ENCODE measurements at regions of chr2 and their contacts with region 1.

Region 1: GRCh38 chr2:200901459-200902072 is 12.4 kb downstream of the NIF3L1 start:
- DNase-seq: peak; percentile 84
- CTCF ChIP-seq: peak; percentile 34

Region 2: GRCh38 chr2:200756618-200757321 is 144.8 kb before region 1 on chr2:
- in situ Hi-C with region 1: no loop called
- DNase-seq: no peak
- CTCF ChIP-seq: no peak

Region 3: GRCh38 chr2:201059961-201060755 is 158.6 kb after region 1 on chr2:
- in situ Hi-C with region 1: loop called (anchors 10 kb)
- DNase-seq: no peak
- CTCF ChIP-seq: no peak

Region 4: GRCh38 chr2:201074996-201075395 is 173.4 kb after region 1 on chr2:
- in situ Hi-C with region 1: no loop called
- DNase-seq: no peak
- CTCF ChIP-seq: no peak

Region 5: DNA sequence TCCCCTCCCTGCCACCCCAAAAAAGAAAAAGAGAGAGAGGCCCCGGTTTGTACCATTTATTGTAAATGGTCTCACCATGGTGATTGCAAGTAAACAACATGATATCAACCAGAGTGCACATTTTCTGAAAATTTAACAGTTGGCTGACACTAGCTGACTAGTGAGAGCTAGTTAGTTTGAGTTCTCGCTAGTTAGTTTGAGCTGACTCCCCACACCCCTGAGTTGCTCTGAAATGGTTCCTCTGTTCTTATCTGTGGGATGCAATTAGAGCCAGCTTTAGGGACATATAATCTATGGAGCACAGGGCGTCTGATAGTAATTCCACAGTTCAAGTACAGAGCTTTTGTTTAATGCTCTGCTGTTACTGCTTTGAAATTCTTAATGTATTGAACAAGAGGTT is 294.4 kb after region 1 on chr2:
- in situ Hi-C with region 1: no loop called
- DNase-seq: no peak
- CTCF ChIP-seq: no peak

Region 6: GRCh38 chr2:201618744-201619662 is 717.4 kb after region 1 on chr2:
- in situ Hi-C with region 1: no loop called
- DNase-seq: peak; percentile 34
- CTCF ChIP-seq: no peak